Activated CD4-positive, alpha-beta T cell treated with anti-CD3 and anti-CD28 coated beads for 36 hours (primary cell): ENCODE measurements at regions of chr3 and their contacts with region 1.

Region 1: DNA sequence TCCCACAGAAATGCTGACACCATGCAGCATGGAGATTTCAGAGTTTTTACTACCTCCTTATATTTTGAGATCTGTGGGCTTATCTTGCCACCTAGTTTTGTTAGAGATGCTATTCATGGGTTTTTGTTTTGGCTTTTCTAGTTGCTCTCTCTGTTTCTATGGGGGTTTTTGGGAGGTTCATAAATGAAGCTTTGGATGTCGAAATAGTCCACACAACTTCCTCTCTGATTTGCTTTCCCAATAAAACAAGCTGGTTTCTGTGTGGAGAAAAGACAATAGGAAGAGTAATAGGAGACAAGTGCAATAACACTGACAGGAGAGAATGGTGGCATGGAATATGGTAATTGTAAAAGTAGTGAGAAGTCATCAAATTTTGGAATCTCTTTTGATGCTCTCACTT is 106.8 kb upstream of the GPR149 start:
- DNase-seq: no peak
- ATAC-seq: no peak
- H3K4me3 Mint-ChIP-seq: no peak overlapping the region
- H3K27ac Mint-ChIP-seq: no peak overlapping the region
- H3K4me1 Mint-ChIP-seq: no peaks in the 10 kb centered on the region
- H3K27me3 Mint-ChIP-seq: peaks cover 4% of the 10 kb centered on the region

Region 2: DNA sequence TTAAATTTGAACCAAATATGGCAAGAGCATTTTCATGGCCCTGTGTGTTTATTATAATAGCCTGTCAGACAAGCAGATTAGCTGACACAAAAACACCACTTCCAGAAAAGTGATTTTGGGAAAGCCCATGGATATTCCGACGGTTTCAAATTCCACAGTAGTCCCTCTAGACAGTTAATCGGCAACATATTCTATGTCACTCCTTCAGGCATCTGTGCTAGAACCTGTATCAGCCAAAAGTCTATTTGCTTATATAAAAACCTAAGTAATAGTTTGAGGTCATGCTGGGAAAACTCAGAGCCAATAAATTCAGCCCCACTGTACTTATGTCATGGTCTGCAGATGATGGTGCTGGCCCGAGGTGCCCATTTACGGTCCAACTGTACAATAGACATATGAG is 525.7 kb before region 1 on chr3:
- CTCF ChIA-PET with region 1: no interaction called
- POLR2A ChIA-PET with region 1: no interaction called
- intact Hi-C with region 1: no loop called
- DNase-seq: no peak
- ATAC-seq: no peak
- H3K4me3 Mint-ChIP-seq: no peak overlapping the region
- H3K27ac Mint-ChIP-seq: no peak overlapping the region
- H3K4me1 Mint-ChIP-seq: no peaks in the 10 kb centered on the region
- H3K27me3 Mint-ChIP-seq: no peaks in the 10 kb centered on the region

Region 3: DNA sequence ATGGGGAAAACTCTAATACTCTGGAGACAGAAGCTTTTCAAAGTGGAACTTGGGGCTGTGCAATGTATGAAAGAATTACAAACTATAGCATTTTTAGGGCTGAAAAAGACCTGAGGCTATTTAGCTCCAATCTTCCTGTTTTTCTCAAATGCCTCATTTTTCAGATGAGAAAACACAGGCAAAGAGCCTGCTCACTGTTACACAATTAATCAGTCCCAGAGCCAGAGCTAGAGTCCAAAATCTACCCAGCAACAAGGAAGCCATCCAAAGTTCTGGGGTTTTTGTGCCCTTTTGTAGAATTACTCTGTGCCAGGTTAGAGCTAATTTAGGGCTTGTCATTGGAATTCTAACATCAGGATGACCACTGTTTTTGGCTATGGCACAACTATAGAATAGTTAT is 152.3 kb before region 1 on chr3:
- CTCF ChIA-PET with region 1: no interaction called
- POLR2A ChIA-PET with region 1: no interaction called
- intact Hi-C with region 1: no loop called
- DNase-seq: no peak
- ATAC-seq: no peak
- H3K4me3 Mint-ChIP-seq: no peak overlapping the region
- H3K27ac Mint-ChIP-seq: no peak overlapping the region
- H3K4me1 Mint-ChIP-seq: no peaks in the 10 kb centered on the region
- H3K27me3 Mint-ChIP-seq: peaks cover 19% of the 10 kb centered on the region

Region 4: DNA sequence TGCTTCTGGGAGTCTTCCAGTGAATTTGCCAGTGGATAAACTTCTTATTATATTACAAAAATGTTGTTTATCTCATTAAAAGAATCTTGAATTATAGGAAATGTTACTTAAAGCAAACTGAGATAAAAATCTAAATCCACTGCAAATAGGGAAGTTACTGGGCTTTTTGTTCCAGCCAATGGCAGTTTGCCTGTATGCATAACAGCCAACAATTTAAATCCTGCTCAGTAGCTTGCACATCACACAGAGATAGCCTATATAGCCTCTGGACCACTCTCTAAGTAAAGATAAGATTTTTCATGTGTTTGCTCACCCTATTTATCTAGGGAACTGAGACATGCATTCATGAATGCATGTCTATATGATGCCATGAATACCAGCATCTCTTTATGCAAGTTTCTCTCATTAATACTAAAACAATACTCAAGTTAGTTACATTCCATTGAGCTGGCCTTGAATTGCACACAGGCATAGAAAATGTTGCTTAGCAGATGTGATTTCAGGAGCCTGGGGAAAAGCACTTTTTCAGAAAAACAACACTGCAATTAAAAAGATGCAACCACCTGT is 14.6 kb before region 1 on chr3:
- CTCF ChIA-PET with region 1: interaction called, 10 read pairs
- POLR2A ChIA-PET with region 1: no interaction called
- intact Hi-C with region 1: no loop called
- DNase-seq: no peak
- ATAC-seq: no peak
- H3K4me3 Mint-ChIP-seq: no peak overlapping the region
- H3K27ac Mint-ChIP-seq: no peak overlapping the region
- H3K4me1 Mint-ChIP-seq: no peaks in the 10 kb centered on the region
- H3K27me3 Mint-ChIP-seq: no peaks in the 10 kb centered on the region

Region 5: DNA sequence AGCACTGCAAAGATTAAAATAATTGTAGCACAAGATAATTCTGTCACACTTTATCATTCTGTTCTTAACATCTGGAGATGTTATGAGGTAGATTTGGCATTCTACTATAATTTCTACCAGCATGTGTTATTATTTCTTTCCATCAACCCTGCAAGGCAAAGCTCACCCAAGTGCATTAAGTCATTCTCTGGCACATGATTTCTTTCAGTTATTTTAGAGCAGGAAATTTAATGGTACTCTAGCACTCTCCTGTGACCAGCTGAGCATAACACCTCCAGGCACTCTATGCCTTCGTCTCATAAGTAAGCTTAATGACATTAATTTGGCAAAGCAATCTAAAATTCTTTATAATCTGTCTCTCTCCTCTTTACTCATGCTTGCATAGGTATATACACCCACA is 193.4 kb after region 1 on chr3:
- CTCF ChIA-PET with region 1: no interaction called
- POLR2A ChIA-PET with region 1: no interaction called
- intact Hi-C with region 1: no loop called
- DNase-seq: no peak
- ATAC-seq: no peak
- H3K4me3 Mint-ChIP-seq: no peak overlapping the region
- H3K27ac Mint-ChIP-seq: no peak overlapping the region
- H3K4me1 Mint-ChIP-seq: no peaks in the 10 kb centered on the region
- H3K27me3 Mint-ChIP-seq: no peaks in the 10 kb centered on the region